Activated naive CD4-positive, alpha-beta T cell treated with anti-CD3 and anti-CD28 coated beads for 36 hours (primary cell): ENCODE measurements at regions of chr20 and their contacts with region 1.

Region 1: GRCh38 chr20:63309261-63310071 is 16.5 kb downstream of the COL20A1 start:
- DNase-seq: peak; percentile 34
- H3K4me3 Mint-ChIP-seq: no peak overlapping the region
- H3K27ac Mint-ChIP-seq: no peak overlapping the region
- H3K4me1 Mint-ChIP-seq: no peaks in the 10 kb centered on the region
- H3K27me3 Mint-ChIP-seq: peaks cover 11% of the 10 kb centered on the region

Region 2: GRCh38 chr20:63381807-63382322 is 72.4 kb after region 1 on chr20:
- CTCF ChIA-PET with region 1: interaction called, 32 read pairs
- intact Hi-C with region 1: loop called (anchors 1 kb)
- DNase-seq: peak; percentile 29
- H3K4me3 Mint-ChIP-seq: no peak overlapping the region
- H3K27ac Mint-ChIP-seq: no peak overlapping the region
- H3K4me1 Mint-ChIP-seq: no peaks in the 10 kb centered on the region
- H3K27me3 Mint-ChIP-seq: peaks cover 19% of the 10 kb centered on the region

Region 3: GRCh38 chr20:63457737-63458136 is 148.3 kb after region 1 on chr20:
- CTCF ChIA-PET with region 1: no interaction called
- intact Hi-C with region 1: no loop called
- DNase-seq: no peak
- H3K4me3 Mint-ChIP-seq: no peak overlapping the region
- H3K27ac Mint-ChIP-seq: no peak overlapping the region
- H3K4me1 Mint-ChIP-seq: no peaks in the 10 kb centered on the region
- H3K27me3 Mint-ChIP-seq: peaks cover 28% of the 10 kb centered on the region